Left ventricle myocardium superior (tissue), 1 donor: ENCODE measurements at regions of chr14 and their contacts with region 1.

Region 1: GRCh38 chr14:102209217-102209966 is 69.7 kb downstream of the WDR20 start:
- DNase-seq: no peak
- ATAC-seq: peak; percentile 77

Region 2: DNA sequence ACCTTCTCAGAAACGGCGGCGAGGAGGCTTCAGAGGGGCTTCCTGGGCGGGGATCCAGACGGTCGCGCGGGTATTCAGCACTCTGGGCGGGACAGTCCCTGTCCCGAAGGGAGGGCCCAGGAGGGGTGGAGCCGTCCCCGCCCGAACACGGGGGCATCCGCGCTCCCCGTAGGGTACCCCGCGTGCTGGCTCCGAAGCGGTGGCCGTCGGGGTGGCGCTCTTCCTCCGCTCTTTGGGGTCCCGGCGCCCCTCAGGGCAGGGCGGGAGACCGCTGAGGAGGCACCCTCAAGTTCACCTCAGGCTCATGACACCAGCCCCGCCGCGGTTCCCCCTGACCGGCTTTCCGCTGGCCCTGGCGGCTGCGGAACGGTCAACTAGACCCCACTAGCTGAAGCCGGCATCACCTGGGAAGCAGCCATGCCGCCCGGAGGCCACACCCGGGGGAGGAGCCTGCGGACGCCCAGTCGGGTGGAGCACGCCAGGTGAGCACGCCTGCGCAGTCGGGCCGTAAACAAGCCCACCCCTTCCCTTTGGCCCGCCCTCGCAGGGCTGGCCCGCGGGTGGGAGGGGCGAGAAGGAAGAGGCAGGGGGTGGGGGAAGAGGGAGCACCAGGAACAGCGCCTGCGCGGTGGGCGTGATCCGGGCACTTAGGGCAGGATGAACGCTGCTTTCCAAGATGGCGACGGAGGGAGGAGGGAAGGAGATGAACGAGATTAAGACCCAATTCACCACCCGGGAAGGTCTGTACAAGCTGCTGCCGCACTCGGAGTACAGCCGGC is 70.0 kb before region 1 on chr14 and contains the start of gene WDR20:
- intact Hi-C with region 1: loop called (anchors 10 kb)
- DNase-seq: peak; percentile 99
- ATAC-seq: peak; percentile 99
- total RNA-seq, gene WDR20: 20.5 TPM

Region 3: GRCh38 chr14:102351026-102351425 is 141.6 kb after region 1 on chr14:
- intact Hi-C with region 1: no loop called
- DNase-seq: peak; percentile 46
- ATAC-seq: peak; percentile 76